ENCODE measurements at regions of chr19 and their contacts with region 1.

Region 1: GRCh38 chr19:57191141-57192076 is at the start of gene ZNF264:
- DNase-seq: peak; percentile 86
- H3K4me3 Mint-ChIP-seq: peak within 1 kb of the TSS; percentile 97
- H3K27ac Mint-ChIP-seq: peak within 1 kb of the TSS; percentile 96
- H3K4me1 Mint-ChIP-seq: peaks cover 22% of the 10 kb centered on the region
- H3K27me3 Mint-ChIP-seq: no peaks in the 10 kb centered on the region
- CTCF ChIP-seq: no peak
- total RNA-seq, gene ZNF264: 34.4 and 41.1 TPM in 2 replicates

Region 2: GRCh38 chr19:57171551-57172081 is 19.8 kb before region 1 on chr19:
- CTCF ChIA-PET with region 1: interaction called, 3 read pairs
- POLR2A ChIA-PET with region 1: interaction called, 15 read pairs
- intact Hi-C with region 1: no loop called
- DNase-seq: peak; percentile 4
- H3K4me3 Mint-ChIP-seq: peak overlapping the region; percentile 80
- H3K27ac Mint-ChIP-seq: no peak overlapping the region
- H3K4me1 Mint-ChIP-seq: no peaks in the 10 kb centered on the region
- H3K27me3 Mint-ChIP-seq: no peaks in the 10 kb centered on the region
- CTCF ChIP-seq: no peak

Region 3: DNA sequence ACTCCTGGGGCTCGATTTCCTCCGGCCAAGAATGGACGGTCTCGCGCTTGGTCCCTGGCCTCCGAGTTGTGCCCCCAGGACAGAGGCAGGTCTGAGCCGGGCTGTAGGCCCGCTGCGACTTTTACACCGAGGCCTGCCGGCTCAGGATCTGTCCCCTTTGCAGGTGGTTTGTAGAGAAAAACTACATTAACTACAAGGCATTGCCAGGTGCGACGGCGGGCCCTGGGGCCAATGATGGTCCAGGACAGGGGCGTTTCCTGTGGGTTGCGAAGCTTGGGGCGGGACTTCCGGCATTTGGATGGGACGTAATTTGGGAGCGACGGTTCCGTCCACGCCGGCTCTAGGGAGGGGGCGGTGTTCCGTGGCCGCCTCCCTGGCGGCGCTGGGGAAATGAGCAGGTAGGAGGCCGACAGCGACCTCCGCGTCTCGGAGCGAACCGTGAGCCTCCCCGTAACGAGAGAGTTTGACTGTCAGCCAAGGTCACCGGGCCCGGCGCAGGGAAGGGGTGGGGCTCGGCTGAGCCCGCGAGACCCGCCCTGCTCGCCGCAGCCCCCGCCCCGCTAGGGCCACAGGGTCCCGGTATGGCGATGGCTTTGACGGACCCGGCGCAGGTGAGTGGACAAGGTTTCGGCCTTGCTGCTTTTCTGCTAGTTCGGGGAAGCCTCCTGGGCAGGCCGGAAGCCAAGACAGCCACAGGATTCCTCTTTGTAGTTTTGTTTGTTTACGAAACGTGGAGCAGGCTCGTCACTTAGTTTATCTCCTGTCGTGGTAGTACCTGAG is 49.1 kb after region 1 on chr19 and contains the start of gene ZNF805:
- CTCF ChIA-PET with region 1: no interaction called
- POLR2A ChIA-PET with region 1: interaction called, 23 read pairs
- intact Hi-C with region 1: loop called (anchors 1 kb)
- DNase-seq: peak; percentile 95
- H3K4me3 Mint-ChIP-seq: peak within 1 kb of the TSS; percentile 73
- H3K27ac Mint-ChIP-seq: peak within 1 kb of the TSS; percentile 70
- H3K4me1 Mint-ChIP-seq: peaks cover 6% of the 10 kb centered on the region
- H3K27me3 Mint-ChIP-seq: no peaks in the 10 kb centered on the region
- CTCF ChIP-seq: no peak
- total RNA-seq, gene ZNF805: 11.8 and 12.2 TPM in 2 replicates